ENCODE measurements at regions of chr10 and their contacts with region 1.

Region 1: DNA sequence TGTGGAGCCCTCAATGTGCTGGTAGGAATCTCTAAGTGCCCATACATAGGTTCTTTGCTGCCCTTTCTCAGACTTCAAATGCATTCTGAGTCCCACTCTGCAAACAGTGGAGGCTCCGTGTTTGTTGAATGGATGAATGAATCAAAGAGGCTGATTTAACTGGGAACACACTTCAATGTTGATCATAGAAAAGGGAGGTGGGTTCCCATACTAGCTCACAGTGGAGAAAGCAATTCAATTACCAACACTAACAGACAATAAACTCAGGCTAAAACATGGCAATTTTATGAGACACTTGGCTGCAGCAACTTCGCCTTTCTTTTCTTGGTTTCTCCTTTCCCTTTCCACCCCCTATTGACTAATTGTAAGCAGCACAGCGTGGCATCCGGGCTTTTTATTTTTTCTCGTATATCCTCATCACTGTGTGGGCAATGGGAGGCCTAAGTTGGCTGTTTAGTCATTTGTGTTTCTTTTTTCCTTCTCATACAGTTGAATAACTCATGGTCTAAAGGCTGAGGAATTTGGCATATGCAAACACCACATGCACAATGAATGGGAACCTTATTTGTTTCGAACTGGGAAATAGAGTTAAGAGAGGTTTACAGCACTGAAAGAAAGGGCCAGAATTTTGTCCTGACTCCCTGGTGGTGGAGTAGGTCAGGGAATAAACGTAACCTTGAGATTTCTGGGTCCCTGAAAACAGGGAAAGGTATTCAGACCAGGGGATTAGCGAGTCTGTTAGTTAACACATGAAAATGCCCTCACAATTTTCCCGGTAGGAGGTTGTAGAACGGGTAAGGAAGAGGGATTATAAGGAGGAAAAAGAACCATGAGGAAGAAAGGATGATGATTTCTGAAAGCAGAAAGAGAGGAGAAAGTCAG is 858.5 kb downstream of the KCNMA1 start:
- DNase-seq: no peak
- ATAC-seq: no peak

Region 2: GRCh38 chr10:76432274-76433012 is 346.7 kb before region 1 on chr10:
- intact Hi-C with region 1: loop called in 1 of 2 experiments (anchors 10 kb)
- DNase-seq: peak; percentile 48
- ATAC-seq: peak; percentile 64 to 83

Region 3: DNA sequence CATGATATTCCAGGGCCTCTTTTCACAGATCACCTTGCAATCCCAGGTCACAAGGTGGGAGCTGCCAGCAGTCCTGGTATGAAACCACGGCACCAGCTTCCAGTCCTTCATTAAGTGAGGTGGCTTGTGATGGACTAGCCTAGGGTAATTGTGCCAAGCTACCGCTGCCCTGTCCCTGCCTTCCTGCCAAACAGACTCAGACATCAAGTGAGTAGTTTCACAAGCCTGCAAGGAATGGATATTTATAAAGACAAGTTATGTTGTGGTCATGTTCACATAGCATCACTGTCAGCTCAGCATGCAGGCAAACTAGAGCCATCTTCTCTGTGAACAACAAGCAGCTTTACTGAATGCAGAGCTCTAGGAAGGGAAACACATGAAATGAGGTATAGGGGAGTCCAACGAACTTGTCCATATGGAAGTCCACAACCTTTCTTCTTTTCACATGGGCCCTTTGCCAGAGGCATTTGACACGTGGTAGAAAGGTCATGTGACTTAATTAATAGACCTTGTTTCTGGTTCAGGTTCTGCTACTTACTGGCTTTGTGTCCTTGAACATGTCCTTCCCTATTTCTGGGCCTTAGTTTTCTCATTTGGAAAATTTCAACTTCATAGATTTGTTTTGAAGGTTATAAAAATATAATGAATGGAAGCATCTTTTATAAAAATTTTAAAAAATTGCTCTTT is 202.7 kb before region 1 on chr10:
- intact Hi-C with region 1: loop called in 1 of 2 experiments (anchors 10 kb)
- DNase-seq: peak; percentile 35
- ATAC-seq: peak; percentile 80 to 90

Region 4: GRCh38 chr10:76882245-76882644 is 103.1 kb after region 1 on chr10:
- intact Hi-C with region 1: loop called in 1 of 2 experiments (anchors 5 kb)
- DNase-seq: no peak
- ATAC-seq: peak in 1 of 2 donors; percentile 64

Region 5: DNA sequence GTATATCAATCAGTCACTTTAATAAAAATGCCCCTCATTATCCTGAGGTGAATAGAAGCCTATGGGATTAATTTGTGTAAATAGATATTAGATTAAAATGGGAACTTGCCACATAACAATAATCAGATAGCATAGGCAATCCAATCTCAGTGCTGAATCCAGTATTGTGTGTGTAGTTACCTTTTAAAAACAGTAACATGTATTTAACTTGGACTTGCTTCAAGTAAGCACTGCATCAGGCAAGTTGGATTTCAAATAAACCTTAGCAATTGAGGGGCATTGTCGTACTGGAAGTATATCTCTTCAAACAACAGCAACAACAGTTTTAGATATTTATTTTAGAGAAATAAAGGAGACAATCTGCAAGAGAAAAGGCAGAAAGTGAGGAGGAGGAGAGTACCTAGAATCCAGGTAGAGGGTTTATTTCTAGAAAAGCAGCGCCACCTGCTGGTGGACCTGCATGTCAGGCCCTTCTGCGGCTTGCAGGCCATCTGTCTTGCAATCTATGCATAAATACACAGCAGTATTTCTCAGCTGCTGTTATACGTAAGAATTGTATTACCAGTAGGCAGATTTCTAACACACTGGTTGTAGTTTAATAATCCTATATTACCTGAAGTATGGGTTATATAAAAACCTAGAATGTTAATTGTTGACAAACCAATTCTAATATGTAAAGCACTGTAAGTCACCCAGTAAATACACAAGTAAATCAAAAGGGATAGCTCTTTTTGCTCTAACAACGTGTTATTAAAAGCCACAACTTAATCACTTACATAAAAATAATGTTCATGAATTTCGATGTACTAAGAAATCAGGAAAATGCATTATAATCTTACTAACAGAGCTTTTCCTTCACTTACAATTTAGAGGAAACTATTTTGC is 205.6 kb after region 1 on chr10:
- intact Hi-C with region 1: loop called in 1 of 2 experiments (anchors 10 kb)
- DNase-seq: peak; percentile 64
- ATAC-seq: peak; percentile 77 to 84

Measured in left cardiac atrium (tissue), 4 donors.